ENCODE measurements at regions of chr20 and their contacts with region 1.

Region 1: GRCh38 chr20:10521068-10521831 is 86.1 kb downstream of the SLX4IP start:
- DNase-seq: no peak
- H3K4me3 Mint-ChIP-seq: no peak overlapping the region
- H3K27ac Mint-ChIP-seq: peak overlapping the region; percentile 13
- H3K4me1 Mint-ChIP-seq: peaks cover 41% of the 10 kb centered on the region
- H3K27me3 Mint-ChIP-seq: peaks cover 1% of the 10 kb centered on the region

Region 2: GRCh38 chr20:10350188-10350842 is 170.9 kb before region 1 on chr20:
- intact Hi-C with region 1: loop called (anchors 2 kb)
- DNase-seq: no peak
- H3K4me3 Mint-ChIP-seq: peak overlapping the region; percentile 9
- H3K27ac Mint-ChIP-seq: peak overlapping the region; percentile 75
- H3K4me1 Mint-ChIP-seq: peaks cover 24% of the 10 kb centered on the region
- H3K27me3 Mint-ChIP-seq: no peaks in the 10 kb centered on the region

Region 3: GRCh38 chr20:10447027-10447426 is 74.2 kb before region 1 on chr20:
- intact Hi-C with region 1: loop called (anchors 2 kb)
- DNase-seq: peak; percentile 27
- H3K4me3 Mint-ChIP-seq: peak overlapping the region; percentile 55
- H3K27ac Mint-ChIP-seq: peak overlapping the region; percentile 70
- H3K4me1 Mint-ChIP-seq: peaks cover 21% of the 10 kb centered on the region
- H3K27me3 Mint-ChIP-seq: no peaks in the 10 kb centered on the region

Region 4: GRCh38 chr20:10558635-10559187 is 37.5 kb after region 1 on chr20:
- intact Hi-C with region 1: loop called (anchors 1 kb)
- DNase-seq: peak; percentile 53
- H3K4me3 Mint-ChIP-seq: no peak overlapping the region
- H3K27ac Mint-ChIP-seq: peak overlapping the region; percentile 61
- H3K4me1 Mint-ChIP-seq: peaks cover 36% of the 10 kb centered on the region
- H3K27me3 Mint-ChIP-seq: no peaks in the 10 kb centered on the region

Region 5: GRCh38 chr20:10603971-10604864 is 83.0 kb after region 1 on chr20:
- intact Hi-C with region 1: loop called (anchors 1 kb)
- DNase-seq: no peak
- H3K4me3 Mint-ChIP-seq: no peak overlapping the region
- H3K27ac Mint-ChIP-seq: no peak overlapping the region
- H3K4me1 Mint-ChIP-seq: peaks cover 14% of the 10 kb centered on the region
- H3K27me3 Mint-ChIP-seq: no peaks in the 10 kb centered on the region

Region 6: GRCh38 chr20:10708351-10709185 is 187.3 kb after region 1 on chr20:
- intact Hi-C with region 1: no loop called
- DNase-seq: no peak
- H3K4me3 Mint-ChIP-seq: no peak overlapping the region
- H3K27ac Mint-ChIP-seq: no peak overlapping the region
- H3K4me1 Mint-ChIP-seq: no peaks in the 10 kb centered on the region
- H3K27me3 Mint-ChIP-seq: peaks cover 3% of the 10 kb centered on the region